HepG2 (cell line): ENCODE measurements at regions of chr17 and their contacts with region 1.

Region 1: GRCh38 chr17:65485376-65486299 is 75.8 kb downstream of the AXIN2 start:
- DNase-seq: no peak
- ATAC-seq: no peak
- H3K4me3 ChIP-seq: no peak overlapping the region
- H3K27ac ChIP-seq: no peak overlapping the region
- H3K4me1 ChIP-seq: peaks cover 10% of the 10 kb centered on the region
- H3K27me3 ChIP-seq: peaks cover 1 to 3% of the 10 kb centered on the region in 2 experiments; a peak in 2 of 5 replicates
- CTCF ChIP-seq: no peak
- EP300 ChIP-seq: no peak
- POLR2A ChIP-seq: no peak
- RAD21 ChIP-seq: no peak

Region 2: GRCh38 chr17:65418628-65419027 is 67.0 kb before region 1 on chr17:
- CTCF ChIA-PET with region 1: no interaction called
- POLR2A ChIA-PET with region 1: no interaction called
- in situ Hi-C with region 1: loop called (anchors 10 kb)
- intact Hi-C with region 1: no loop called
- DNase-seq: no peak
- ATAC-seq: peak; percentile 52; the same call in 2 of the 3 replicates
- H3K4me3 ChIP-seq: no peak overlapping the region
- H3K27ac ChIP-seq: no peak overlapping the region
- H3K4me1 ChIP-seq: no peaks in the 10 kb centered on the region
- H3K27me3 ChIP-seq: no peaks in the 10 kb centered on the region
- CTCF ChIP-seq: peak; percentile 60
- EP300 ChIP-seq: no peak
- POLR2A ChIP-seq: no peak
- RAD21 ChIP-seq: no peak

Region 3: GRCh38 chr17:65434878-65435277 is 50.8 kb before region 1 on chr17:
- CTCF ChIA-PET with region 1: no interaction called
- POLR2A ChIA-PET with region 1: no interaction called
- in situ Hi-C with region 1: no loop called
- intact Hi-C with region 1: no loop called
- DNase-seq: no peak
- ATAC-seq: no peak
- H3K4me3 ChIP-seq: no peak overlapping the region
- H3K27ac ChIP-seq: no peak overlapping the region
- H3K4me1 ChIP-seq: peaks cover 20% of the 10 kb centered on the region
- H3K27me3 ChIP-seq: peaks cover 0 to 2% of the 10 kb centered on the region in 2 experiments; a peak in 1 of 5 replicates
- CTCF ChIP-seq: no peak
- EP300 ChIP-seq: no peak
- POLR2A ChIP-seq: no peak
- RAD21 ChIP-seq: no peak